ENCODE measurements at regions of chr7 and their contacts with region 1.

Region 1: GRCh38 chr7:100208911-100209408 is 10.8 kb upstream of the PVRIG start:
- DNase-seq: peak; percentile 78
- H3K4me3 Mint-ChIP-seq: peak overlapping the region; percentile 68
- H3K27ac Mint-ChIP-seq: peak overlapping the region; percentile 92
- H3K4me1 Mint-ChIP-seq: peaks cover 52% of the 10 kb centered on the region
- H3K27me3 Mint-ChIP-seq: no peaks in the 10 kb centered on the region

Region 2: GRCh38 chr7:100190048-100190711 is 18.8 kb before region 1 on chr7:
- CTCF ChIA-PET with region 1: interaction called, 25 read pairs
- intact Hi-C with region 1: loop called (anchors 1 kb)
- DNase-seq: no peak
- H3K4me3 Mint-ChIP-seq: no peak overlapping the region
- H3K27ac Mint-ChIP-seq: peak overlapping the region; percentile 80
- H3K4me1 Mint-ChIP-seq: peaks cover 45% of the 10 kb centered on the region
- H3K27me3 Mint-ChIP-seq: no peaks in the 10 kb centered on the region

Region 3: GRCh38 chr7:100195222-100195621 is 13.7 kb before region 1 on chr7:
- CTCF ChIA-PET with region 1: interaction called, 25 read pairs
- intact Hi-C with region 1: loop called (anchors 1 kb)
- DNase-seq: no peak
- H3K4me3 Mint-ChIP-seq: no peak overlapping the region
- H3K27ac Mint-ChIP-seq: peak overlapping the region; percentile 10
- H3K4me1 Mint-ChIP-seq: peaks cover 51% of the 10 kb centered on the region
- H3K27me3 Mint-ChIP-seq: no peaks in the 10 kb centered on the region

Region 4: DNA sequence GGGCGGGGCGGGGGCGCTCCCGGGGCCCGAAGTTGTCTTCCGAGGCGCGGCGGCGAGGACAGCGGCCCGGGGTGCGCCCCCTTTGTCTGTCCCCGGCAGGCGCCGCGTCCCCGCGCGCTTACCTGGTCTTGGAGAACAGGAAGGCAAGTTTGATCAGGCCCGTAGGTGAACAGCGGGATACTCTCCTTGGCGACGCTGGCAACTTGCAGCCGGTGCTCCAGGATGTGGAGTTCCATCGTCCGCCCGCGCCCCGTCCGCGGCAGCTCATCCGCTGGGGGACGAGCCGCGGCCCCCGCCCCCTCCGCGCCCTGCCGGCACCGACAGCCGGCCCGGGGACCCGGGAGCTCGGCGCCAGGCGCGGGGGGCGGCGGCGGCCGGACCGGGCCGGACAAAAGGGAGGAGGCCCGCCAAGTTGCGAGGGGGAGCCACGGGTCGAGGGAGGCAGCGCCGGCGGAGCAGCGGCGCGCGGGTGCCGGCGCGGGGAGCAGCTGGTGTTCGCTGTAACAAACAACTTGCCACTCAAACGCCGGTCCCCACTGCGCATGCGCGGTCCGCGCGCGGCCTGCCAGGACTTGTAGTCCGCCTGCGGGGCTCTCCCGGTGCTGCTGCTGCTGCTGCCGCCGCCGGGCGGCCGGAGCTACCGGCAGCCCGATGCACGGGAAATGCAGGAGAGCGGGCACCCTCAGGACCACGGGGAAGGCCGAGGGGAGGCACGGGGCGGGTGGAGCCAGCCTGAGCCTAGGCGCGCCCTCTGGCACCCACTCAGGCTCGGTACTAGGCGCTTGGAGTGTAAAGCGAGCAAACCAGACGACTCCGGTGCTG is 63.0 kb after region 1 on chr7:
- CTCF ChIA-PET with region 1: no interaction called
- intact Hi-C with region 1: no loop called
- DNase-seq: peak; percentile 98
- H3K4me3 Mint-ChIP-seq: peak overlapping the region; percentile 70
- H3K27ac Mint-ChIP-seq: no peak overlapping the region
- H3K4me1 Mint-ChIP-seq: peaks cover 11% of the 10 kb centered on the region
- H3K27me3 Mint-ChIP-seq: no peaks in the 10 kb centered on the region

Region 5: GRCh38 chr7:100342765-100343164 is 133.8 kb after region 1 on chr7:
- CTCF ChIA-PET with region 1: interaction called, 3 read pairs
- intact Hi-C with region 1: loop called (anchors 5 kb)
- DNase-seq: no peak
- H3K4me3 Mint-ChIP-seq: no peak overlapping the region
- H3K27ac Mint-ChIP-seq: peak overlapping the region; percentile 81
- H3K4me1 Mint-ChIP-seq: peaks cover 46% of the 10 kb centered on the region
- H3K27me3 Mint-ChIP-seq: no peaks in the 10 kb centered on the region

Measured in activated naive CD4-positive, alpha-beta T cell treated with anti-CD3 and anti-CD28 coated beads for 36 hours (primary cell).